Mucosa of descending colon (tissue), 3 donors: ENCODE measurements at regions of chr10 and their contacts with region 1.

Region 1: DNA sequence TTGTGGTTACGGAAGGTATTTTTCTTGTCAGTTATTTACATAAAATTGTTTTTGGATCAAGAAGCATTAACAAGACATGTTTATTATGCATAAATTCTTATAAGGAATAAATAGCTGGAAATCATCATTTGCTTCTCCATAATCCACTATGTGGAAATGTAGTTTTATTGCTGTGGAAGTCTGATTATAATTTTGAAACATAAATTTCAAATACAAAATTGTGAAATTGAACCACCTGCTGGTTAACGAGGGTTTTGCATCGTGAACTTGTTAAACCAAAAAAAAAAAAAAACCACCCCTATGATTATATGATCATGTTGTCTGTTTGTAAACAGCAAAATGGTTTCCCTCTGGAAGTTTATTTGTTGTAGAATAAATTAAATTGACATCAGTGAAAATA is 25.9 kb downstream of the ABRAXAS2 start:
- DNase-seq: peak in 1 of 3 donors; percentile 63
- ATAC-seq: no peak
- H3K4me3 ChIP-seq: no peak overlapping the region
- H3K4me1 ChIP-seq: no peaks in the 10 kb centered on the region
- CTCF ChIP-seq: no peak

Region 2: GRCh38 chr10:124530215-124530665 is 297.2 kb before region 1 on chr10:
- intact Hi-C with region 1: loop called in 1 of 2 experiments (anchors 5 kb)
- DNase-seq: peak; percentile 89 to 94 (median 91)
- ATAC-seq: peak; percentile 93
- H3K4me3 ChIP-seq: no peak overlapping the region
- H3K4me1 ChIP-seq: peaks cover 5% of the 10 kb centered on the region
- CTCF ChIP-seq: peak; percentile 90